ENCODE measurements at regions of chr3 and their contacts with region 1.

Region 1: GRCh38 chr3:183385698-183386613 is 42.5 kb downstream of the MCF2L2 start:
- DNase-seq: peak; percentile 62 to 70
- H3K4me3 ChIP-seq: no peak overlapping the region
- H3K4me1 ChIP-seq: no peaks in the 10 kb centered on the region
- H3K27me3 ChIP-seq: no peaks in the 10 kb centered on the region

Region 2: DNA sequence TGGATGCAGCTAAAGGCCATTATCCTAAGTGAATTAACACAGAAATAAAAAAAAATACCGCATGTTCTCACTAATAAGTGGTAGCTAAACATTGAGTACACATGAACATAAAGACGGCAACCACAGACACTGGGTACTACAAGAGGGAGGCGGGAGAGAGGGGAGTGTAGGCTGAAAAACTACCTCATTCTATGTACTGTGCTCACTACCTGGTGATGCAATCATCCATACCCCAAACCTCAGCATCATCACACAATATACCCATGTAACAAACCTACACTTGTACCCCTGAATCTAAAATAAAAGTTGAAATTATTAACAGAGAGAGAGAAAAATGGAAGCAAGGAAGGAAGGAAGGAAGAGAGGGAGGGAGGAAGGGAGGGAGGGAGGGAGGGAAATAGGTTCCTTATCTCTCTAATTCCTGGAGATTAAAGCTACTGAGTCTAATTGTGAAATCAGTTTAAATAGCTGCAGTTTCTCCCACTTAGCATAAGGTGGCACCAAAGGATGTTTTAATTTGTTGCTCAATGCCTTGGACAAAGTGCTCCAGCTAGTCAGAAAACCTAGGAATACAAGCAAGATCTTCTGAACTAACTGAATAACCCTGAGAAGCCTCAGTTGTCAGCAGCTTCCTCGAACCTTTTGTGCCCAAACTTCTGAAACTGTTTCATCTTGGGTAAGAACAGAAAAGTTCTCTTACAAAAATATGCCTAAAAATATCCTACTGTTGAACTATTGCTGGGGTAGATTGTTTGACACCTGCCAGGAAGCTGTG is 672.0 kb before region 1 on chr3:
- in situ Hi-C with region 1: loop called (anchors 10 kb)
- DNase-seq: peak in 1 of 2 experiments; percentile 79
- H3K4me3 ChIP-seq: no peak overlapping the region
- H3K4me1 ChIP-seq: no peaks in the 10 kb centered on the region
- H3K27me3 ChIP-seq: no peaks in the 10 kb centered on the region

Region 3: DNA sequence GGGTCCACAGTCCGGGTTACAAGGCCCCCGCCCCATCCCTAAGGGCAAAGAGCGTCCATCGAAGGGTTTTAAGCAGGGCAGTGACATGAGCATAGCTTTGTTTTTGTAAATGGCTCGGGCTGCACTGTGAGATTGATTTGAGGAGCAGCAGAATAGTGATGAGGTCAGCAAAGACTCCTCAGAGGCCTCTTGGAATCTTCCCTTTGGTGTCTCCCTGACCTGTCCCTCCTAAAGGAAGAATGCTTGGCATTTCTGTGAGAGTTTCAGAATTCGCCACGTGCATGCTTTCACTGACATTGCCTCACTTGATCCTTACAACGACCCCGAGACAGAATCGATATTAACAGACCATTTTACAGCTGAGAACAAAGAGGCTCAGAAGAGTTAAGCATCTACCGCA is 243.8 kb before region 1 on chr3:
- in situ Hi-C with region 1: no loop called
- DNase-seq: no peak
- H3K4me3 ChIP-seq: no peak overlapping the region
- H3K4me1 ChIP-seq: no peaks in the 10 kb centered on the region
- H3K27me3 ChIP-seq: no peaks in the 10 kb centered on the region

Region 4: GRCh38 chr3:183178629-183179549 is 207.1 kb before region 1 on chr3:
- in situ Hi-C with region 1: loop called (anchors 5 kb)
- DNase-seq: peak; percentile 42 to 84
- H3K4me3 ChIP-seq: peak overlapping the region; percentile 44
- H3K4me1 ChIP-seq: no peaks in the 10 kb centered on the region
- H3K27me3 ChIP-seq: no peaks in the 10 kb centered on the region

Region 5: DNA sequence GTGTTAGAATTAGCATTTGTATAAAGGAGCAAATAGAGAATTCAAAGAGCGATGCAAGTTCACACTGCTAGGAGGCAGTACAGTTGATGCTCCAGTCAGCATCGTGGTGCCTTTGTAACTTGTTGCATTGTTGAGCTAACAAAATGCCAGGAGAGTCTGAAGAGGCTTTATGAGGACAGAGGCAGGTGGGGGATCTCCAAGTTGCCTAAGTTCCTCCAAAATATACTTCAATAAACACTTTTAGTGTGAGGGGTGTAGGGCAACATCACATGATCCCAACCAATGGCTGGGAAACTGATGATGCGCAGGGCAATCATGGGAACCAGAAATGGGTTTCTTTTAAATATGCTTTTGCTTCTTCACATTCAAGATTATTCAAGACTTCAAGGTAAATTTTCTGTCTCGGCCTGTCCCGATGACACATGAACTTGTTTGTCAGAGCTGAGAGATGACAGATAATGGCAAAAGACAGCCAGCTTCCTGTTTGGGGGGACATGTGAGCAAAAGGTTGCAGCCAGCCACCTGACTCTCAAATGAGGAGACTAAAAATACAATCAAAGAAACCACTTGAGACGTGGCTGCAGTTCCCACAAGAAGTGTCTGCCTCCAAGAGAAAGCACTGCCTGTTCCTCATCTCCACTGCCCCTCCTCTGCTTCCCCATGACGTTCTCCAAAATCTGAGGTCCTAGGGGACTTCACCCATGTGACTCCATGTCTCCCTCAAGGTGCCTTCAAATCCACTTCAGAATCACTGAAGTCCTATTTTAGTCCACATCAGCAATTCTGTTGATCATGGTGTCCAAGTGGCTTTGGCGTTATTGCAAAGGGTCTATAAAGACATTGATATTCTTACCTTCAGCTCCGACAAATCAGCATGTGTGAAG is 130.3 kb after region 1 on chr3:
- in situ Hi-C with region 1: no loop called
- DNase-seq: no peak
- H3K4me3 ChIP-seq: no peak overlapping the region
- H3K4me1 ChIP-seq: peaks cover 11% of the 10 kb centered on the region
- H3K27me3 ChIP-seq: no peaks in the 10 kb centered on the region

Measured in HAP-1 (cell line).